ENCODE measurements at regions of chr19 and their contacts with region 1.

Region 1: DNA sequence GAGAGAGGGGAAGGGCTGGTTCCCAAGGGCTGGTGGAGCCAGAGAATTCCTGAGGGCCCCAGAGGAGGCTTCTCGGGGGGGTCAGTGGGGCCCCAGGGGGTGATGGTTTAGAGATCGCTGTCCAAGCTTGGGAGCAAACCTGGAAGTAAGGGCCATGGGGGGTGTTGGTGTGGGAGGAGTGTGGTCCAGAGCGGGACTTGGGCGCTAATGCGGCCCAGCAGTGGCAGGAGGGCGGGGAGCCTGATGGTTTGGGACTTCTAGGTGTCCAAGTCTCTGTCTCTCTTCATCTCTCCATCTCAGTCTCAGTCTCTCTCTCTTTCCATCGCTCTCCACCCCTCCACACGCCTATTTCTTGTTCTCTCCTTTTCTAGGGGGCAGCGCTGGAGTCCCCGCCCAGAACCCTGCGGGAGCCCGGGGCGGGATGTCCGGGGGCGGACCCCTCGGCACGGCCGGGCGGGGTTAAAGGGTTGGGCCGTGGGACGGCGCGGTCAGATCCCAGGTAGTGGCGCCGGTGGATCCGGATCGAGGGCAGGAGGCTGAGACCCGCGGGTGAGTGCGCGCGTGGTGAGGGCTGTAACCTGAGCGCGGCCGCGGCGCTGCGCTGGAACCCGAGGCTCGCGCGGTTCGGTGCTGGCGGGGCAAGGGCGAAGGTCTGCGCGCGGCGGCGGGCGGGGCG is at the start of gene CYP4F22:
- DNase-seq: peak; percentile 25
- H3K4me3 Mint-ChIP-seq: peak within 1 kb of the TSS; percentile 64
- H3K27ac Mint-ChIP-seq: no peak within 1 kb of the TSS
- H3K4me1 Mint-ChIP-seq: peaks cover 19% of the 10 kb centered on the region
- H3K27me3 Mint-ChIP-seq: peaks cover 22% of the 10 kb centered on the region
- total RNA-seq, gene CYP4F22: 0.50 to 0.56 TPM

Region 2: GRCh38 chr19:15532779-15533521 is 24.8 kb after region 1 on chr19:
- CTCF ChIA-PET with region 1: no interaction called
- POLR2A ChIA-PET with region 1: no interaction called
- intact Hi-C with region 1: loop called (anchors 1 kb)
- DNase-seq: peak; percentile 43
- H3K4me3 Mint-ChIP-seq: no peak overlapping the region
- H3K27ac Mint-ChIP-seq: peak overlapping the region; percentile 43
- H3K4me1 Mint-ChIP-seq: peaks cover 29% of the 10 kb centered on the region
- H3K27me3 Mint-ChIP-seq: peaks cover 4% of the 10 kb centered on the region

Measured in activated CD4-positive, alpha-beta memory T cell treated with anti-CD3 and anti-CD28 coated beads for 36 hours (primary cell).